Calu3 (cell line): ENCODE measurements at regions of chr7 and their contacts with region 1.

Region 1: GRCh38 chr7:83655951-83656556 is 7.1 kb upstream of the SEMA3E start:
- DNase-seq: peak; percentile 53
- H3K4me3 Mint-ChIP-seq: no peak overlapping the region
- H3K27ac Mint-ChIP-seq: no peak overlapping the region
- H3K4me1 Mint-ChIP-seq: no peaks in the 10 kb centered on the region
- H3K27me3 Mint-ChIP-seq: no peaks in the 10 kb centered on the region
- CTCF ChIP-seq: peak; percentile 45

Region 2: DNA sequence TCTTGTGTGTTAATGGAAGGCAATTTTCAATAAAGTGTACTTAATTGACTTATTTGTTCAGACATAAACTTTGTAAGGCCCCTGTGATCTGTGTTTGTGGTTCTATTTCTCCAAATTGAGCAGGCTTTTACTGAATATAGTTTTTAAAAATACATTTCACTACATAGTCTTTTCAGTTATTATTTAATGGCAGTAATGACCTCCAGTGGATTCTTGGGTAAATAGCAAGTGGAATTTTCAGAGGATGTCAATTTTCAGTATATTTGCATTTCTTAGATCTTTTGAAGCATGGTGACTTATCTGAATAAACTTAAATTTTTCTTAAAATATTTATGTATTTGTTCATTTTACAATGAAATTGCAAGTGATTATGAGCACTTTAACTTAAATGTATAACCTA is 290.3 kb before region 1 on chr7:
- CTCF ChIA-PET with region 1: no interaction called
- intact Hi-C with region 1: loop called (anchors 2 kb)
- DNase-seq: no peak
- H3K4me3 Mint-ChIP-seq: no peak overlapping the region
- H3K27ac Mint-ChIP-seq: no peak overlapping the region
- H3K4me1 Mint-ChIP-seq: no peaks in the 10 kb centered on the region
- H3K27me3 Mint-ChIP-seq: no peaks in the 10 kb centered on the region
- CTCF ChIP-seq: no peak

Region 3: GRCh38 chr7:83410989-83411591 is 245.0 kb before region 1 on chr7:
- CTCF ChIA-PET with region 1: no interaction called
- intact Hi-C with region 1: loop called (anchors 1 kb)
- DNase-seq: peak; percentile 9
- H3K4me3 Mint-ChIP-seq: no peak overlapping the region
- H3K27ac Mint-ChIP-seq: no peak overlapping the region
- H3K4me1 Mint-ChIP-seq: peaks cover 5% of the 10 kb centered on the region
- H3K27me3 Mint-ChIP-seq: no peaks in the 10 kb centered on the region
- CTCF ChIP-seq: peak; percentile 30

Region 4: GRCh38 chr7:83617858-83618257 is 38.2 kb before region 1 on chr7:
- CTCF ChIA-PET with region 1: no interaction called
- intact Hi-C with region 1: no loop called
- DNase-seq: no peak
- H3K4me3 Mint-ChIP-seq: no peak overlapping the region
- H3K27ac Mint-ChIP-seq: peak overlapping the region; percentile 24
- H3K4me1 Mint-ChIP-seq: no peaks in the 10 kb centered on the region
- H3K27me3 Mint-ChIP-seq: no peaks in the 10 kb centered on the region
- CTCF ChIP-seq: no peak

Region 5: DNA sequence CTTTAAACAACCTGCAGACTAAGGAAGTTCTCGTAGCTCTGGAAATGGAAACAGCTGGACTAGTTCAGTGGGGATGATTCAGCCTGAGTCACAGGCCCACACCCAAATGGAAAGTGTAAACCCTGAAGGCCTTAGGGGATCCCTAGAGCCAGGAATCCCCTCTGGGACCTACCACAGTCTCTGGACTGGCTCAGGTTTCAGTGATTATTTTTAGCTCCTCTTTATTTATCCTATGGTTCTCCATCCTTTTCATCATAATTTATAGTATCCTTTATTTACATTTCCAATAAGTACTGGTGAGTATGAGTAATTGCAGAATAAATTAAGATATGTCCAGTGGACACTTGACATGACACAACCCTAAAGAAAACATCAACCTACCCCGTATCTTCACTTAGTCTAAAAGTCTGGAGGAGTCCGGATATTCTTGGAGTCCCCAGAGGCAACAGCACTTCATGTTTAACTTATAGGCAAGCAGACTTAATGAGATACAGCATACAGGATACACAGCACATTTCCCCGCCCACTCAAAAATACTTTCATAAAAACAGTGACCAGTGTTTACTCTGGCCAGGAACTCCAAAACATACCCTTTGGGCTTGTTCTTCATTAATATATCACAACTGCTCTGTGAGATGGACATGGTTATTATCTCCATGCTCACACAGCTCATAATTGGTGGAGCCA is 21.3 kb after region 1 on chr7:
- CTCF ChIA-PET with region 1: no interaction called
- intact Hi-C with region 1: no loop called
- DNase-seq: peak; percentile 58
- H3K4me3 Mint-ChIP-seq: no peak overlapping the region
- H3K27ac Mint-ChIP-seq: peak overlapping the region; percentile 50
- H3K4me1 Mint-ChIP-seq: peaks cover 14% of the 10 kb centered on the region
- H3K27me3 Mint-ChIP-seq: no peaks in the 10 kb centered on the region
- CTCF ChIP-seq: no peak

Region 6: DNA sequence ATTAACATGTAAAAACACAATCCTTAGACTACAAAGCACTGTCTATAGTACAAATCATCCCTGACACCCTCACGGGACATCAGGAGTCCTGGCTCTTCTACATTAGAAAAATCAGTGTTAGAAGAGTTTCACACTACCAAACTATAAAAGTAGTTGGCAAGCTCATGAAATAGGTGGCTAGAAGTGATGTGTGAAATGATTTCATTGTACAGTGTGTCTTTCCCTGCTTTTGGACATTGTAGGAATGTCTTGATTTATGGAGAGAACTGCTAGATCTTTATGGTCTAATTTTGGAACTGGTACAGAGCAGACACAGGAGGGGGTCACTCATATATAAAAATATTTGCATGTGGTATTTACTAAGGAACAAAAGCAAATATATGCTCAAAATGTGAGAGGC is 505.3 kb after region 1 on chr7:
- CTCF ChIA-PET with region 1: no interaction called
- intact Hi-C with region 1: no loop called
- DNase-seq: no peak
- H3K4me3 Mint-ChIP-seq: no peak overlapping the region
- H3K27ac Mint-ChIP-seq: no peak overlapping the region
- H3K4me1 Mint-ChIP-seq: no peaks in the 10 kb centered on the region
- H3K27me3 Mint-ChIP-seq: no peaks in the 10 kb centered on the region
- CTCF ChIP-seq: no peak